Esophagus squamous epithelium (tissue), 5 donors: ENCODE measurements at regions of chr19 and their contacts with region 1.

Region 1: DNA sequence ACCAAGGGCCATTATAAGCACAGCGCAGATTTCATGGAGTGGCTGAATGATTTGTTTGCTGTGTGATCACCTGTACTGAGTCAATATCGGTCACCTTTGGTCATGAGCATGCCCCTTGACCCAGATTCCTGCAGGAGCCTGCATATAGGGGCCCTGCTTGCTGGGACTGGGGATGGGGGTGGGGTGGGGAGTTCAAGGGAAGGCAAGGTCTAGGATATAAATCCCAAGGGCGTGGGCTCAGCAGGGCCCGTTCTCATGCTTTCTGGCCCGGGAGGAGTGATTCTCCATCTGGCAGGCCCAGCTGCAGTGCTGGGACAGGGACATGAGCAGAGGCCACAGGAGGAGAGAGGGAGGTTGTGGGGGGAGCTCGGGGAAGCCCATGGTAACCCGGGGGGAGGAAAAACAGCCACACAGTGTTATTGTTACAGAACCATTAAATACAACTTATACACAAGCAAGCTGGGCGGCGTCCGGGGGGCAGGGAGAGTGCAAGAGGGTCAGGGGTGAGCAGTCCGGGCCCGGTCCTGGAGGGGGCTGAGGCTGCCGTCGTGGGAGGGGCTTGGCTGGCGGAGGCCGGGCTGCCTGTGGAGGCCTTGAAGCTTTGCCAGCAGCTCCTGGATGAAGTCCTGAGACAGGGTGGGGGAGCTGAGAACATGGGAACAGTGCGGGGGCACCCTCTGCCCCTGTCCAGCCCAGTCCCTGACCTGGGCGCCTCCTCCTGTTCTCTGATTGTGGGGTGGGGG is 5.2 kb downstream of the PPP1R14A start:
- DNase-seq: no peak
- H3K4me3 ChIP-seq: peak overlapping the region in 3 of 4 donors; percentile 34 to 69 (median 52)
- H3K27ac ChIP-seq: peak overlapping the region; percentile 61 to 92 (median 84)
- H3K4me1 ChIP-seq: peaks cover 0 to 67% (median 20%) of the 10 kb centered on the region in 3 donors
- H3K27me3 ChIP-seq: peaks cover 0 to 10% (median 0%) of the 10 kb centered on the region in 4 donors
- CTCF ChIP-seq: no peak
- POLR2A ChIP-seq: no peak

Region 2: GRCh38 chr19:38304866-38305429 is 54.0 kb after region 1 on chr19:
- intact Hi-C with region 1: no loop called
- DNase-seq: no peak
- H3K4me3 ChIP-seq: peak overlapping the region; percentile 50 to 67 (median 58)
- H3K27ac ChIP-seq: peak overlapping the region; percentile 92 to 98 (median 96)
- H3K4me1 ChIP-seq: peaks cover 5 to 53% (median 5%) of the 10 kb centered on the region in 3 donors
- H3K27me3 ChIP-seq: no peaks in the 10 kb centered on the region
- CTCF ChIP-seq: no peak
- POLR2A ChIP-seq: peak in 3 of 4 donors; percentile 21 to 74 (median 53)

Region 3: GRCh38 chr19:38329651-38330050 is 78.7 kb after region 1 on chr19:
- intact Hi-C with region 1: loop called (anchors 5 kb)
- DNase-seq: no peak
- H3K4me3 ChIP-seq: no peak overlapping the region
- H3K27ac ChIP-seq: no peak overlapping the region
- H3K4me1 ChIP-seq: peaks cover 0 to under 1% (median 0%) of the 10 kb centered on the region in 3 donors
- H3K27me3 ChIP-seq: no peaks in the 10 kb centered on the region
- CTCF ChIP-seq: no peak
- POLR2A ChIP-seq: no peak